ENCODE measurements at regions of chr12 and their contacts with region 1.

Region 1: DNA sequence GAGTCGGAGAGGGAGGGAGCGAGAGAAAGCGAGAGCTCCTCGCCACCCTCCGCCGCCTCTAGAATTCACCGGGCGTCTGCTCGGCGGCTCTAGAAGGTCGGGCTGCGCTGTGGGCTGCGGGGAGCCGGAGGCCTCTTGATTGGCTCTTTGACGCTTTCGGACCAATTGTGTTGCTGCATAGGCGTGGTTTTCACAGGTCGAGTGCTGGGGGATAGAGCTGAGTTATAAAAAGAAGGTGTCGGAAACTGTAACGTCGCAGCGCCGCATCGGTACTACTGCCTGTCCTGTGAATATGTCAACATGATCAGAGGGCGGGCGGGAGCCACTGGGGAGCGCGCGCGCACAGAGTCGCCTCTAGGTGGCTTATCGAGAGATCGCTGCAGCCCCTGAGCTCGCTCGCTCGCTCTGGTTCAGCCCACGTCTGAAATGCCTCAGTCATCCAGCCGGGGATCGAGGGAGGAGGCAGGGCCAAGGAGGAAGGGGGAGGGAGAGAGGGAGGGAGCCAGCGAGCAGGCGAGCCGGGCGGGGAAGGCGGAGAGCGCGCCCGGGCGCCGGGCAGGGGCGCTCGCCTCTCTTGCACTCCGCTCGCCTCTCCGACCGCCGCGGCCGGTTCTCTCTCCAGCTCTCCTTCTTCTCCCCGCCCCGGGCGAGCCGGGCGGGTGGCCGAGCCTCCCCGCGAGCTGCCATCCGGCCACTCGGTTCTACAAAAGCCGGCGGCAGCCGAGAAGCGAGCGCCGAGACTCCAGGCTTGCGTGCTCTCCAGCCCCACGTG is at the start of gene TBX3:
- DNase-seq: peak; percentile 99
- H3K4me3 ChIP-seq: peak within 1 kb of the TSS; percentile 90
- CTCF ChIP-seq: peak; percentile 51

Region 2: DNA sequence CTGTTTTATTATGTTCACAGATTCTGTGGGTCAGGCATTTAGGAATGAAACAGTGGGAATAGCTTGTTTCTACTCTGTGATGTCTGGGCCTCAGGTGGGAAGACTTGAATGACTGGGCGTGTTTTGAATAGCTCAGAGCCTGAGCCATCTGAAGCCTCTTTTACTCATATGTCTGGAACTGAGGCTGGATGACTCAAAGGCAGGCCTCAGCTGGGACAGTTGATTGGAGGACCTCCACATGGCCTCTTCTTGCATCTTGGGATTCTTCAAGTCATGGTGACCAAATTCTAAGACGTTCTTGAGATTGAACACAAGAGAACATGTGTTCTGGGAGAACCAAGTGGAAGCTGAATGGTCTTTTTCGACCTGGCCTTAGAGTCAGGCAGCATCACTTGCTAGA is 45.4 kb after region 1 on chr12:
- in situ Hi-C with region 1: no loop called
- DNase-seq: no peak
- H3K4me3 ChIP-seq: no peak overlapping the region
- CTCF ChIP-seq: no peak

Region 3: GRCh38 chr12:114835031-114835430 is 150.7 kb after region 1 on chr12:
- in situ Hi-C with region 1: no loop called
- DNase-seq: peak; percentile 60
- H3K4me3 ChIP-seq: no peak overlapping the region
- CTCF ChIP-seq: no peak

Region 4: GRCh38 chr12:115149685-115150378 is 465.5 kb after region 1 on chr12:
- in situ Hi-C with region 1: loop called (anchors 5 kb)
- DNase-seq: peak; percentile 66
- H3K4me3 ChIP-seq: no peak overlapping the region
- CTCF ChIP-seq: no peak

Region 5: GRCh38 chr12:115204957-115205754 is 520.9 kb after region 1 on chr12:
- in situ Hi-C with region 1: no loop called
- DNase-seq: no peak
- H3K4me3 ChIP-seq: no peak overlapping the region
- CTCF ChIP-seq: no peak

Region 6: DNA sequence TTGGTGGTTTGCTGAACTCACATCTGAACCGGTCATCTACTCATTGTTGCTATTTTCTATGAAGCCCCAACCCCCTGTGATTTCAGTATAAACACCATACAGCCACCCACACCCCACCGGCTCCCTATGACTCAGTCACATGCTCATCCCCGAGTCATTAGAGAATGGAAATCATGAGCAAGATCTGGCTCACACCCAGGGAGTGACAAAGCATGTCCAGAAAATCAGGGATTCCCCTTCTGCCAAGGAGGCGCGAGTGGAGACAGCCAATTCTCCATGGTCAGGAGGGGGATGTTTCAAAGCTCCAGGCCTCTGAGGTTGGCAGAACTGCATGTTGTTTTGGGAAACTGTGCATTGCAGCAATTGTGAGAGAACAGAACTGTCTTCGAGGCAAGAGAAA is 657.2 kb after region 1 on chr12:
- in situ Hi-C with region 1: loop called (anchors 25 kb)
- DNase-seq: peak; percentile 98
- H3K4me3 ChIP-seq: no peak overlapping the region
- CTCF ChIP-seq: no peak

Region 7: GRCh38 chr12:115953450-115953849 is 1269.2 kb after region 1 on chr12:
- in situ Hi-C with region 1: loop called (anchors 10 kb)
- DNase-seq: no peak
- H3K4me3 ChIP-seq: no peak overlapping the region
- CTCF ChIP-seq: no peak

Measured in astrocyte of the cerebellum (primary cell).